ENCODE measurements at regions of chr13 and their contacts with region 1.

Region 1: GRCh38 chr13:42969558-42970172 is 22.4 kb downstream of the EPSTI1 start:
- DNase-seq: no peak
- H3K4me3 ChIP-seq: no peak overlapping the region
- CTCF ChIP-seq: peak; percentile 78

Region 2: GRCh38 chr13:42950181-42950580 is 19.5 kb before region 1 on chr13:
- CTCF ChIA-PET with region 1: interaction called, 27 read pairs
- POLR2A ChIA-PET with region 1: no interaction called
- DNase-seq: no peak
- H3K4me3 ChIP-seq: no peak overlapping the region
- CTCF ChIP-seq: no peak

Region 3: DNA sequence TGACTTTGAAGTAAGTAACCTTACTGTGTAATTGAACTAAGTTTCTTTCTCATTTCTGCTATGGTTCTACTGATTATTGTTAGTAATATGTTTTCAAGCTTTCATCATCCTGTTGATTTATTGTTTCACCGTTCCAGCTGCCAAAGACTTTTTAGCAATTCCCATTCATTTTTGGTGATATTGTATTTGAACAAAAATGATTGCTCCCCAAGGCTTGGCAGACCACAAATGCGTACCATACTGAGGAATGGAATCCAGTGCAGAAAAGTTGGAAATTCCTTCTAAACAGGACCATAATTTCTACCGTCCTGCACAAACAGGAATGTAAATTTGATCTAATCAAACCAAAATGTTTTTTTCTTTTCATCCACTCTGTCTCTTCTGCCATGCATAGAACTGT is 11.7 kb after region 1 on chr13:
- CTCF ChIA-PET with region 1: interaction called, 59 read pairs
- POLR2A ChIA-PET with region 1: interaction called, 3 read pairs
- DNase-seq: peak; percentile 53
- H3K4me3 ChIP-seq: no peak overlapping the region
- CTCF ChIP-seq: no peak

Region 4: DNA sequence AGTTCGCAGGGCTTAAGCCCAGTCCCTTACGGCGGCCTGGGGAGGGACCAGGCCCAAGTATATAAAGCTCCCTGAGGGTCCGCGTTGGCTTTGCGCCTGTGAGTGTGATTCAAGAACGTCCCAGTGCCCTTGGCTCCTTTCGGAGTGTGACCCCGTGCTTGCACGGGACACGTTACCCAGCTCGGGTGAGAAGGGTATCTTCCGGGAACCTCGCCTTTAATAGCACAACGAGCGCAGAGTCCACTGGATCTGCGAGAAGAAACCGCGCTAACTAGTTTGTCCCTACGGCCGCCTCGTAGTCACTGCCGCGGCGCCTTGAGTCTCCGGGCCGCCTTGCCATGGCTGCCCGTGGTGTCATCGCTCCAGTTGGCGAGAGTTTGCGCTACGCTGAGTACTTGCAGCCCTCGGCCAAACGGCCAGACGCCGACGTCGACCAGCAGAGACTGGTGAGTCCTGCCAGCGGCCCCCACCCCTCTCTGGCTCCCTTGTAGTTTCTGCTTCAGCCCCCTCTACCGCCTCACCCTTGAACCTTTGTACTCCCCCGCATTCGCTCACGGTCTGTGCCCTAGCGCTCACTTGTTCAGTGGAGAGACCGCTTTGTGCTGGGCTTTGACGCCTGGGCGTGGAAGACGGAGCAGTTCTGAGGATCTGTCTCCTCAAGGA is 53.8 kb after region 1 on chr13 and contains the start of gene DNAJC15:
- CTCF ChIA-PET with region 1: interaction called, 10 read pairs
- POLR2A ChIA-PET with region 1: no interaction called
- DNase-seq: no peak
- H3K4me3 ChIP-seq: peak within 1 kb of the TSS; percentile 77
- CTCF ChIP-seq: no peak

Region 5: DNA sequence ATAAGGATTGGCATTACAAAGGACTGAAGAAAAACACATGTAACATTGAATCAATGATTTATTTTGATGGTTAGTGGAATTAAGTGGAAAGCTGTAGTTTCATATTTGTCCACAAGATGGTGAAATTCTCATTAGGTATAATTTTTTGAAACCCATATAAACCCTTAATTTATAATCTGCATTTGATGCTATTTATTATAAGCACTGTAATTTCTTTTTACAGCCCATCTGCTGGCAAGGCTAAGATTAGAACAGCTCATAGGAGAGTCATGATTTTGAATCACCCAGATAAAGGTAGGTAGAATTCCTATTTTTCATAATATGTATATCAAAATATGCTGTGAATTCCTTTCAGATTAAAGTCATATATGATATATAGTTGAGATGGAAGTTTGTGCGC is 115.9 kb after region 1 on chr13:
- CTCF ChIA-PET with region 1: interaction called, 23 read pairs
- POLR2A ChIA-PET with region 1: no interaction called
- DNase-seq: no peak
- H3K4me3 ChIP-seq: no peak overlapping the region
- CTCF ChIP-seq: no peak

Region 6: DNA sequence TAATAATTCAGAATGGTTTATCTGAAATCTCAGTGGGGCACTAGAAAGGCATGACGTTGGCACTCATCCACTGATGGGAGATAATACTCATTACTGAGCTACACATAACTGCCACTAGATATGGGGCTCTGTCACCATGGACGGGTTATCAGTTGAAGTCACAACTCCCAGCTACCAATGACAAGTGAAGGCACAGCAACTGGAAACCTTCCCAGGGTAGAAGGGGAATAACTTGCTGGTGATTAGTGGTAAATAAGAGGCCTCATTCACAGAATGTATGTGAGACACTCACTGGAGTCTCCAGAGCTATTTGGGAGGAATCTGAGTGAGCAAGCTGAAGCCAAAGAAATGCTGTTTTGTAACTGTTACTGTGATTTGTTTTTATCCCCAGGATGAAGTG is 567.5 kb after region 1 on chr13:
- CTCF ChIA-PET with region 1: no interaction called
- POLR2A ChIA-PET with region 1: no interaction called
- DNase-seq: peak; percentile 63
- H3K4me3 ChIP-seq: no peak overlapping the region
- CTCF ChIP-seq: no peak